Aorta (tissue), 5 donors: ENCODE measurements at regions of chr6 and their contacts with region 1.

Region 1: GRCh38 chr6:37207903-37208456 is 38.0 kb downstream of the PIM1 start:
- DNase-seq: peak; percentile 91 to 92
- ATAC-seq: peak; percentile 69
- H3K4me3 ChIP-seq: no peak overlapping the region
- H3K27ac ChIP-seq: no peak overlapping the region
- H3K4me1 ChIP-seq: no peaks in the 10 kb centered on the region
- H3K27me3 ChIP-seq: no peaks in the 10 kb centered on the region

Region 2: GRCh38 chr6:36885461-36886401 is 322.2 kb before region 1 on chr6 and contains the start of gene C6orf89:
- intact Hi-C with region 1: loop called in 1 of 2 experiments (anchors 10 kb)
- DNase-seq: peak; percentile 99
- ATAC-seq: peak; percentile 100
- H3K4me3 ChIP-seq: peak within 1 kb of the TSS; percentile 20 to 62
- H3K27ac ChIP-seq: peak within 1 kb of the TSS; percentile 57 to 91
- H3K4me1 ChIP-seq: peaks cover 0 to 2% of the 10 kb centered on the region in 2 donors
- H3K27me3 ChIP-seq: no peaks in the 10 kb centered on the region
- total RNA-seq, gene C6orf89: 56.9 to 59.7 TPM

Region 3: GRCh38 chr6:37051138-37052026 is 156.6 kb before region 1 on chr6:
- intact Hi-C with region 1: loop called in 1 of 2 experiments (anchors 10 kb)
- DNase-seq: peak; percentile 93 to 98
- ATAC-seq: peak; percentile 88
- H3K4me3 ChIP-seq: no peak overlapping the region
- H3K27ac ChIP-seq: no peak overlapping the region
- H3K4me1 ChIP-seq: no peaks in the 10 kb centered on the region
- H3K27me3 ChIP-seq: no peaks in the 10 kb centered on the region